A549 (cell line): ENCODE measurements at regions of chr20 and their contacts with region 1.

Region 1: GRCh38 chr20:5788385-5788895 is 38.2 kb downstream of the SHLD1 start:
- DNase-seq: peak; percentile 80 to 94
- ATAC-seq: peak; percentile 91 to 92
- H3K4me3 ChIP-seq: no peak overlapping the region
- H3K27ac ChIP-seq: peak overlapping the region; percentile 69 to 74
- H3K4me1 ChIP-seq: peaks cover 37% of the 10 kb centered on the region
- CTCF ChIP-seq: peak; percentile 99
- EP300 ChIP-seq: no peak
- POLR2A ChIP-seq: no peak
- RAD21 ChIP-seq: peak; percentile 100

Region 2: GRCh38 chr20:5550733-5551529 is 237.5 kb before region 1 on chr20:
- CTCF ChIA-PET with region 1: interaction called, 22 read pairs
- POLR2A ChIA-PET with region 1: no interaction called
- DNase-seq: no peak
- ATAC-seq: peak; percentile 48 to 63; a peak in 5 of 6 replicates
- H3K4me3 ChIP-seq: no peak overlapping the region
- H3K27ac ChIP-seq: no peak overlapping the region
- H3K4me1 ChIP-seq: peaks cover 9% of the 10 kb centered on the region; the same call in 2 of the 3 replicates
- CTCF ChIP-seq: no peak
- EP300 ChIP-seq: no peak
- POLR2A ChIP-seq: no peak
- RAD21 ChIP-seq: no peak

Region 3: DNA sequence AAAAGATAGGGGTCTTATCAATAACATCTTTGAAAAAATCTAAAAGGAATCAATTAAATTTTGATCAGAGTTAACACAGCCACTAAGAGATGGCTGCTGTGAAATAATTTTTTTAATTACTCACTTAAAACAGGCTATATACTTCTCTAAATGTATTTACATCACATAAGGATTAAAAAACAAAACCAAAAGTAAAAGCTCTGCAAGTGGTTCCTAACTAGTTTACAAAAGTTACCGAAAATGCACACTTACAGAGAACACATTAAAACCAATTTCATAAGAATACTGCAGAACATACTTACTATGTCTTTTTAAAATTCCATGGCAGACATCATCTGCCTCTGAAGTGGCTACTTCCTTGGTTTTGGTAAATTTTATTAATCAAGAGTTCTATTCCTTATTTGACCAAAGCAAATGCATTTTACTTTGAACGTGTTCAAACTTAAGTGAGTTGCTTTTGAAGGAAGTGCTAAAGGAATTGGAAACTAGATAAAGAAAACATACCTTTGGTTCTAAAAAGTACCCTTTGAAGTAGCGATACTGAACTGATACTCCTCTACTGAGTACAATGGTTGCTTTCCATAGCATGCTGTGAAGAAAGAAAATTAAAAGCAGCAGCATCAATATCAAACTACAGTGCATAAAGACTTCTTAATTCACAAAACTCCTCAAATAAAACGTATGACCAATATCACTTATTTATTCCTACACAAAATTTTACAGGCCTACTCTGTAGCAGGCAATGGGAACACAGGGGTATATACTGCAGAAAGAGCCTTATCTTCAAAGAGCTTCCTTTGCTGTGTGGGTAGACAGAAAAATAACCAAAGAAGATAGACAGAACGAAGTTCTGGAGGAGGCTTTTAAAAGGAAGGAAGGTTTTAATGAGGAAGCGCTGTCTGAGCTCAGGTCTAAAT is 195.4 kb before region 1 on chr20:
- CTCF ChIA-PET with region 1: interaction called, 25 read pairs
- POLR2A ChIA-PET with region 1: no interaction called
- DNase-seq: no peak
- ATAC-seq: peak in 1 of 2 experiments; percentile 11; a peak in 2 of 6 replicates
- H3K4me3 ChIP-seq: no peak overlapping the region
- H3K27ac ChIP-seq: no peak overlapping the region
- H3K4me1 ChIP-seq: no peaks in the 10 kb centered on the region
- CTCF ChIP-seq: no peak
- EP300 ChIP-seq: no peak
- POLR2A ChIP-seq: no peak
- RAD21 ChIP-seq: no peak

Region 4: GRCh38 chr20:5677389-5677788 is 111.1 kb before region 1 on chr20:
- CTCF ChIA-PET with region 1: interaction called, 13 read pairs
- POLR2A ChIA-PET with region 1: no interaction called
- DNase-seq: no peak
- ATAC-seq: no peak; a peak in 1 of 6 replicates
- H3K4me3 ChIP-seq: no peak overlapping the region
- H3K27ac ChIP-seq: peak overlapping the region; percentile 12 to 58; a peak in 4 of 6 replicates
- H3K4me1 ChIP-seq: peaks cover 22% of the 10 kb centered on the region
- CTCF ChIP-seq: no peak
- EP300 ChIP-seq: no peak
- POLR2A ChIP-seq: no peak
- RAD21 ChIP-seq: no peak

Region 5: GRCh38 chr20:5749952-5750779 is 38.3 kb before region 1 on chr20 and contains the start of gene SHLD1:
- CTCF ChIA-PET with region 1: interaction called, 20 read pairs
- POLR2A ChIA-PET with region 1: no interaction called
- DNase-seq: peak; percentile 83 to 93
- ATAC-seq: peak; percentile 97 to 98
- H3K4me3 ChIP-seq: peak within 1 kb of the TSS; percentile 61
- H3K27ac ChIP-seq: peak within 1 kb of the TSS; percentile 93 to 95
- H3K4me1 ChIP-seq: 0 out of 3 replicates have a peak, but pooled peaks cover 6% of the 10 kb centered on the region
- CTCF ChIP-seq: no peak
- EP300 ChIP-seq: no peak
- POLR2A ChIP-seq: peak; percentile 28; the same call in 1 of the 2 replicates
- RAD21 ChIP-seq: peak; percentile 6 to 29; a peak in 2 of 5 replicates
- polyA plus RNA-seq, gene SHLD1: 17.4 and 18.4 TPM in 2 replicates

Region 6: DNA sequence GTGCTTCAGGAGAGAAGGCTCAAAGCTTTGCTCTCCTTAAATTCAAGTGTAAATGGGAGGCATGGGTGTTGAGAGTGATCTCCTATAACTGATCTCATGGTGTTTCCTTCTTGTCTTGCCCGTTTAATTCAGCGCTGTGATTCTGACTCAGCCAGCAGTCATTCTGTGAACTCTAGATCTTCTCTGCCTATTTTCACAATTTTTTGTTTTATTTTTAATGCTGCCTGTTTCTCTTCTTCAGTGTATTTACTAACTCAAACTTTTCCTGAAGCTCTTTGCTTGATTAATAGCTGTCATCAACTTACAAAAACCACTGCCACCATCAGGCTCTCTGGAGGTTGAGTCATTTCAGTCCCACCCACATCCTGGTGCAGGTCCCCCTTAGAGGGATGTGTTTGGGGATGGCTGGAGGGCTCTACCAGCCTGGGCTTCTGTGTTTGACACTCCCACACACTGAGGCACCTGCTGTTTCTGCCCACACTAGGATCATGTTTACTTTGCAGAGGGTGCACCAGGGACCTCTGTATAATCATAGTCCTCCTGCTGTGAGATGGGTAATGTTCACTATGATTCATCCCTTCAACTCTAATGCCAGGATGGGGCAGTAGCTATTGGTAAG is 55.7 kb after region 1 on chr20:
- CTCF ChIA-PET with region 1: interaction called, 13 read pairs
- POLR2A ChIA-PET with region 1: no interaction called
- DNase-seq: peak; percentile 91 to 96
- ATAC-seq: peak; percentile 98
- H3K4me3 ChIP-seq: no peak overlapping the region
- H3K27ac ChIP-seq: peak overlapping the region; percentile 39 to 65; a peak in 5 of 6 replicates
- H3K4me1 ChIP-seq: peaks cover 45% of the 10 kb centered on the region
- CTCF ChIP-seq: no peak
- EP300 ChIP-seq: peak; percentile 68 to 79; a peak in 3 of 5 replicates
- POLR2A ChIP-seq: no peak
- RAD21 ChIP-seq: peak in 1 of 2 experiments; percentile 66; a peak in 3 of 5 replicates